ENCODE measurements at regions of chr15 and their contacts with region 1.

Region 1: DNA sequence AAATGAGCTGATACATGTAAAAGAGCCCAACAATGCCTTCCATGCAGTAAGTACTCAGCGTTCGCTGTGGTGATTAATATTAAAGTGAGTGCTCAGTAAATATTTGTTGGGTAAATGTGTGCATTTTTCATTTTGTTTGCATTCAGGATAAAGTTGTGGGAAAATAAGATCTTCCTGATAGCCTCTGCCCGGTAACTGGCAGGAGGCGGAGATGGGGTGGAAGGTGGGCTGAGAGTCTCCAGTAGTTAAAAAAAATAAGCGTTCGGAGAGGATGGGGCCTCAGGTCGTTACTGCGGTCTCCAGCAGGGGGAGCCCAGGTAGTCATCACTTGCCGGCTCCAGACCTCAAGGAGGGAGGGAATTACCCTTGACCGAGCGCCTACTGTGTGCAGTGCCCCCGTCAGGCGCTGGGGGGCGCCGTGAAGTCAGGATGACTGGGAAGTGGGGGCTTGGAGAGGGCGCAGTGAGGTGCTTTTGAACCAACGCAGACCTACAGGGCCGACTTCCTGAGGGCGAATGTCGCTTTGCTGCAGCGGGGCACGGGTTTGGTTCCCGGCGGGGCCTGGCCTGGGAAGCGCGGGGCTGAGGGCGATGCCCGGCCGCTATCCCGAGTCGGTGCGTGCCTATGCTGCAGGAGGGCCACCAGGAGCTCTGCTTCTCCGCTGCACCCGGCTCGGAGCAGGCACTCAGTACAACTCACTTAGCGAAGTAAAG is 80.1 kb downstream of the RHCG start:
- DNase-seq: peak; percentile 93
- CTCF ChIP-seq: peak; percentile 80

Region 2: DNA sequence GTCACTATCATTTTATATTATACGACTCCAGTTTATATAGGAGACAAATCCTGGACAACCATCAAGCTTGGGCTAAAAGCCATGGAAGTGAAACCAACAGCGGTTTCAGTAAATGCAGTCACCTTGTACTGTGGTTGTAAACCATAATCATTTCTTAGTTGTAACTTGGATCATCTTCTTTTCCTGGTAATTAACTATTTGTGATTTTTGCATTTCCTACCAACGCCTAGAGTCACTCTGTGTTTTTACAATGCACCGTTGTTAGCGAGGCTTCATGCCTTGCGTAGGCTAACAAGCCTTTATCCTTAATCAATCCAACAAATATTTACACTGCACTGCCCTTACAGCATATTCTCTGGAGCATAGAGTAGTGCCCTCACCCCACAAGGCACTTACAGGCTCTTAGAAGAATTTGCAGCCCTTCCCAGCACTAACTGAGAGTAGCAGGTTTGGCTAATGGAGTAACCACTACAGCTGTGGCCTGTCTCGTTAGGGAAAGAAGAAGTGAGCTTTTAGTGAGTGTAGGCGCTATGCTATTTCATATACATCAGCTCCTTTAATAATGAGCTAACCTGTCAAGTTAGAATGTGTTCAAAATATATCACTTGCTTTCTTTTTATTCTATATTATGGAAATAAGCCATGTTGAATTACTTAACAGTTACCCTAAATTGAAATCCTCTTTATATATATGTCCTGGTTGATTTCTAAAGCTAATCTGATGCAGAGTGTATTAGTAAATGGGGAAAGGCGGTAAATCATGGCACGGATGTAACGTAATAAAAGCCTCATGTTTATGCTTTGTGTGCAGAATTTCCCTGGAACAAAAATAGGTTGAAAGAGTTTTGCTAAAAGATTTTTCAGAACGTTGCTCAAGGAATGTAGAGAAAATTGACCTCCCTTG is 265.3 kb before region 1 on chr15:
- CTCF ChIA-PET with region 1: no interaction called
- POLR2A ChIA-PET with region 1: no interaction called
- DNase-seq: no peak
- CTCF ChIP-seq: no peak

Region 3: GRCh38 chr15:89430530-89431341 is 14.4 kb after region 1 on chr15:
- CTCF ChIA-PET with region 1: interaction called, 57 read pairs
- POLR2A ChIA-PET with region 1: no interaction called
- DNase-seq: peak; percentile 91
- CTCF ChIP-seq: peak; percentile 98

Region 4: DNA sequence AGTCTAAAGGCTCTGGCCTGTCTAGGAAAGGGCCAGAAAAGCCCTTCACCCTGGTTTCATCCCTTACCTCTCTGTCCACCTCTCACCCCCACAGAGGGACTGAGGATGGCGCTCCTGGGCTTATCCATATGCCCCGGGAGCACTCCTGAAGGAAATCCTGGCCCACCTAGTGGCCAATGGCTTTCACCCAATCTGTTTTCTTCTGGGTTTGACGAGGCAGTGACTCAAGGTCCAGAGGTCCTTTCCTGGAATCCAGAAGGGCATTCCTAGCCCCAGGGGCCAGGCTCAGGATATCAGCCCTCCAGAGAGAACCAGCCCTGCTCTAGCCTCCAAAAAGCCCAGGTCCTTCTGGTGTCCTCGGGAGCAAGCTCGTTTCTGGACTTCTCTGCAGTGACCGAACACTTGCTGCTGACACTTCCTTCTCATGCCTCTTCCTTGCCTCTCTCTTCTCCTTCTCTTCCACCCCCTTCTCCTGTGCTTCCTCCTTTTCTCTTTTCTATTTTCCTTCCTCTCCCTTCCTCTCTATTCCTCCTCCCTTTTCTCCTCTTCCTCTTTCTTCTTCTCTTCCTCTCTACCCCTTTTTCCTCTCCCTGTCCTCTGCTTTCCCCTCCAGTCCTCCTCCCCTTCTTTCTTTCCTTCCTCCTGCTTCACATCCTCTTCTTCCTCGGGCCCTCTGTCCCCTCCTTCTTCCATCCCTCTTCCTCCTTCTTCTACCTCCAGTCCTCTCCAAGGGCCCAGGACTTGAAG is 20.4 kb after region 1 on chr15:
- CTCF ChIA-PET with region 1: interaction called, 25 read pairs
- POLR2A ChIA-PET with region 1: no interaction called
- DNase-seq: no peak
- CTCF ChIP-seq: no peak

Region 5: DNA sequence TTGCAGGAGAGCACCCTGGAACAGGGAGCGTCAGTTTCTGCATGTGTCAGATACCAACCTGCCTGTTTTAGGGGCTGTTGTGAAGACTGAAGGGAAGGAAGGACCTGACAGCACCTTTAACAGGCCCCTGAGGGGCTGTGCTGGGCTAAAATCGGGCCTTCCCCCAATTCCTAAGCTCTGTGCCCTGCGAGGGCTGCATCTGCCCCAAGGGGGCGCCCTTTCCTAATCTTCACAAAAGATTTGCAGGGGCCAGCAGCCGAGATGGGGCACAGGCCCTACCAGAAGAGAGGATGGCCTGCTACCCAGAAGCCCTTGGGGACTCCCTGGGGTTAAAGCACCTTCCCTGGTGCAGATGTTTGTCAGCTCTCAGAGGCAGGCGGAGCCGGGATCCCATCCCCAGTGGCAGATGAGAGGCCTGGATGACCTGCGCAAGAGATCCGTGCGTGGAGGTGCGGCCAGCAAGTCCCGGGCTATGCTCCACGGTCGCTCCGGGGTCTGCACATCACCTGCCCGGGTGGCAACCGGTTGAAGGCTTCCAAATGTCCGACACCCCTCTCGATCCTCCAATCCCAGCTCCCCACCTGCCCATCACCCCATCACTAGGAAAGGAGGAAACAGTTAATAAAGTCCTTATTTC is 26.5 kb after region 1 on chr15:
- CTCF ChIA-PET with region 1: interaction called, 25 read pairs
- POLR2A ChIA-PET with region 1: no interaction called
- DNase-seq: peak; percentile 82
- CTCF ChIP-seq: peak; percentile 51

Region 6: GRCh38 chr15:89472785-89473256 is 56.5 kb after region 1 on chr15:
- CTCF ChIA-PET with region 1: interaction called, 16 read pairs
- POLR2A ChIA-PET with region 1: no interaction called
- DNase-seq: peak; percentile 79
- CTCF ChIP-seq: peak; percentile 90

Region 7: DNA sequence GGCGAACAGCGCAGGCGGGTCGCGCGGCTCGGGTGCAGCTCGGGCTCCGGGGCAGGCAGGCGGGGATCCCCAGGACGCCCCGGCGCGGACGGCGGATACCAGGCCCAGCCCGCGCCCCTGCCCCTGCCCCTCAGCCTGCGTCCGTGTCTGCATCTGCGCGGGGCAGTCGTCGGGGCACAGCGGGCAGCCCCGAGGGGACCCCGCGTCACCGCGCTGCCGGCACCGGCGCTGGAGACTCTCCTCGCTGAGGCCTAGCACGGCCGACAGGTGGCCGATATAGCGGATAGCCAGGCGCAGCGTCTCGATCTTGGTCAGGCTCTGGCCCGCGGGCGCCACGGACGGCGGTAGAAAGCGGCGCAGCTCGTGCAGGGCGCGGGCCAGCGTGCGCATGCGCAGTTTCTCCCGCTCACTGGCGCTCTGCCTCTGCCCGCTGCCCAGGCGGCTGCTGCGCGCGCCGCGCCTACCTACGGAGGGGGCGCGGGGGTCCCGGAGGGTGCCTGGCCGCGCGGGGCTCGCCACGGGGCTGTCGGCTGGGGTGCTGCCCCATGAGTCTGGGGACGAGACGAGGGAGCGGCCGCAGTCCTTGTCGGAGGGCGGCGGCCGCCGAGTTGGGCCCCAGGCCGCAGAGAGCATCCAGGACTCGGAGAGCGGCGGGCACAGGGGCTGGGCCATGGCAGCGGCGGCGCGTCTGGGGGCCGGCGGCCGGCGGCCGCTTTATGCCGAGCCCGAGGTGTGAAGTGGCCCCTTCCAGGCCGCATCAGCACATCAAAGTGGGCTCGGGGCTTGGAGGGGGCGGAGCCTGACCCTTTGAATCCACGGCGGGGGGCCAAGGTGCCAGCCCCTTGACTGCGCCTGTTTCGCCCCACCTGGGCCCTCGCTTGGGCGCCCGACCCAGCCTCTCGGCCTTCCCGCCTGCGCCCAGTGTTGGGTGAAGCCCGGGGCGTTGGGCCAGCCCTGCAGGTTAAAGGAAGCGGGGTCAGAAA is 334.6 kb after region 1 on chr15 and contains the start of gene MESP1:
- CTCF ChIA-PET with region 1: no interaction called
- POLR2A ChIA-PET with region 1: no interaction called
- DNase-seq: peak; percentile 95
- CTCF ChIP-seq: peak; percentile 80

Measured in GM10248 (cell line).